ENCODE measurements at regions of chr5 and their contacts with region 1.

Region 1: DNA sequence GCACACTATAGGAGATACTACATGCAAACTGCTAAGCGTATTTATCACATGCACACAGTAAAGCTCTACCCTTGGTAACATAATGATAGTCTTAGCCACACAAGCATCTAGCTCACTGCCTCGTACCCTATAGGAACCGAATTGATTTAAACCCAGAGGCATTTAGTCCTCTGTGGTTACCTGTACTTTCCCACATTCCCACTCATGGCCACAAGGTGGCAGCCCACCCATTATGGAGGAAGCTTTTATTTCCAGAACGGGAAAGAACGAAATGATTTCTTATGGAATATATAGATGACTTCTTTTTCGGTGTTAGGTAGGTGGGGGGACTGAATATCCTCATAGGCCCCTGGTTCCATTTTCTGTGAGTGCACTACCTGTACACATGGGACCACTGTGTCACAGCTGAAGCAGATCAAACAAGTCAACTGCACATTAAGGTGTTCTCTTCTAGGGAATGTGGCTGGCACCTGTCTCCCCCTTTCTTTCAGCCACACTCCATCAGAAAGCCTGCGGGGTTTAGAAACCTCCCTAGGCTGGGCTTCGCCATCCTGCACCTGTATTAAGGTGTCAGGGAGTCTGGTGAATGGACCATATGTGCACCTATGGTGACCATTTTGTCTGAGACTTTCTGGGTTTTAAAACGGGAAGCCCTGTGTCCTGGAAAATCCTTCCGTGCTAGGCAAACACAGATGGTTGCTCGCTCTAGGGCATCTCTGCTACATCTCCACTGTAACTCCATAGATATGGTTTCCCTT is 313.2 kb downstream of the SLIT3 start:
- DNase-seq: no peak
- H3K4me3 ChIP-seq: no peak overlapping the region
- CTCF ChIP-seq: peak; percentile 73

Region 2: GRCh38 chr5:168706655-168707069 is 281.1 kb before region 1 on chr5:
- CTCF ChIA-PET with region 1: interaction called, 12 read pairs
- POLR2A ChIA-PET with region 1: no interaction called
- DNase-seq: no peak
- H3K4me3 ChIP-seq: no peak overlapping the region
- CTCF ChIP-seq: peak; percentile 79

Region 3: GRCh38 chr5:168962306-168962705 is 25.4 kb before region 1 on chr5:
- CTCF ChIA-PET with region 1: interaction called, 10 read pairs
- POLR2A ChIA-PET with region 1: no interaction called
- DNase-seq: no peak
- H3K4me3 ChIP-seq: no peak overlapping the region
- CTCF ChIP-seq: no peak

Region 4: GRCh38 chr5:169003721-169004541 is 16.2 kb after region 1 on chr5:
- CTCF ChIA-PET with region 1: interaction called, 32 read pairs
- POLR2A ChIA-PET with region 1: no interaction called
- DNase-seq: no peak
- H3K4me3 ChIP-seq: no peak overlapping the region
- CTCF ChIP-seq: peak; percentile 44

Region 5: GRCh38 chr5:169302491-169303118 is 314.9 kb after region 1 on chr5:
- CTCF ChIA-PET with region 1: interaction called, 129 read pairs
- POLR2A ChIA-PET with region 1: no interaction called
- DNase-seq: peak; percentile 31
- H3K4me3 ChIP-seq: no peak overlapping the region; the same call in 1 of the 2 replicates
- CTCF ChIP-seq: peak; percentile 80

Region 6: DNA sequence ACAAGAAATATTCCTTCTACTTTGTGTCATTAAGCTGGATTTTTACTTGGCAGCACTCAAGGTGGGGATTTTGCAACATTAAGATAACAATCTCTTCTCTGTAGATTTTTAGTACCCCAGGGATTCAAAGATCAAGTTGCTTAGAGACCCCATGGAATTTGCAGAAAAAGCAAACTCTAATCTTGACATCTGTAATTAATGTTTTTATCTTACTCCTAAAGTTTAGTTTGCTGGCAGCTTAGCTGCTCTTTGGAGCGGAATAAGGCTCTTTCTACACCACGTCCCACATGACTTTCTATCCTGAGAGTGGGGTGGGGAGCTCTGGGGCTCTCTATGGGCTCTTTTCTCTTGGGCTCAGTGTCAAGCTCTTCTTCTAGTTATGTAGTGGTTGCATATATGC is 574.2 kb after region 1 on chr5:
- CTCF ChIA-PET with region 1: interaction called, 12 read pairs
- POLR2A ChIA-PET with region 1: no interaction called
- DNase-seq: no peak
- H3K4me3 ChIP-seq: no peak overlapping the region
- CTCF ChIP-seq: no peak

Region 7: DNA sequence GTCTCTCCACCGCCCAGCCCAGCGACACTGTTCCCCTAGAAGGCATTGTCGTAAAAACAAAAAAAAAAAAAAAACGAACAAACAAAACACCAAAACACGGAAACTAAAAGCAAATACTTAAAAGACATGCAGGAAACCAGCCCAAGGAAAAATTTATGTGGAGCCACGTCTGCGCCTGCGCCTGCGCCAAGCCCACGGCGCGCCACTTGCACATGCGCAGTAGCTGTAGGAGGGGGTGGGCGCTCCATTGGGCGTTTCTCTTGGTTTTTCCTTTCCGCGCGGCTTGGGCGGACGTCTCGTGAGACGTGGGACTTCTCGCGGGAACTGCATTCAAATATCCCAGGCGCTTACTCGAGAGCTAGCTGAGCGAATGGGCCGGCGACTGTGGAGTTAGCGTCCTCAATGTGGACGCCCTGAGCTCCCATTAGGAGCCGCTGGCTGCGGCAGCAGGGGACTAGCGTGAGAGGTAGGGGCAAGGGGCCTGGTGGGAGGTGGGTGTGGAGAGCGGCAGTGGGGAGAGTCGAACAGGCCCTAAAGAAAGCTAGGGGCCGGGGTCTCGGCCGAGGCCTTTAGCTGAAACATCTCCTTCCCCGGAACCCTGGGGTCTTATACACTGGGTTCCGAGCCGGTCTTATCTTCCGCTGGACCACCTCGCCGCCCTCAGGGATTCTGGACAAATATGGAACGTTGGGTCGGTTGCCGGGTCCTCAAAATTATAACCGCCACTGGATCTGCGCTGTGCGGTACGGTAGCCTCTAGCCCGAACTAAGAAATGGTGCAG is 595.9 kb after region 1 on chr5 and contains the start of gene SPDL1:
- CTCF ChIA-PET with region 1: interaction called, 68 read pairs
- POLR2A ChIA-PET with region 1: no interaction called
- DNase-seq: peak; percentile 75
- H3K4me3 ChIP-seq: peak within 1 kb of the TSS; percentile 86
- CTCF ChIP-seq: no peak